Activated CD4-positive, alpha-beta memory T cell treated with anti-CD3 and anti-CD28 coated beads for 36 hours (primary cell): ENCODE measurements at regions of chr9 and their contacts with region 1.

Region 1: GRCh38 chr9:33290247-33291030 is at the start of gene NFX1:
- DNase-seq: peak; percentile 100
- H3K4me3 Mint-ChIP-seq: peak within 1 kb of the TSS; percentile 80
- H3K27ac Mint-ChIP-seq: peak within 1 kb of the TSS; percentile 100
- H3K4me1 Mint-ChIP-seq: peaks cover 54% of the 10 kb centered on the region
- H3K27me3 Mint-ChIP-seq: no peaks in the 10 kb centered on the region
- total RNA-seq, gene NFX1: 36.5 to 38.6 TPM

Region 2: GRCh38 chr9:33024966-33025571 is 265.4 kb before region 1 on chr9 and contains the start of gene DNAJA1:
- CTCF ChIA-PET with region 1: no interaction called
- POLR2A ChIA-PET with region 1: interaction called, 8 read pairs
- intact Hi-C with region 1: loop called (anchors 1 kb)
- DNase-seq: peak; percentile 96
- H3K4me3 Mint-ChIP-seq: peak within 1 kb of the TSS; percentile 98
- H3K27ac Mint-ChIP-seq: peak within 1 kb of the TSS; percentile 95
- H3K4me1 Mint-ChIP-seq: peaks cover 57% of the 10 kb centered on the region
- H3K27me3 Mint-ChIP-seq: no peaks in the 10 kb centered on the region
- total RNA-seq, gene DNAJA1: 173 to 184 TPM

Region 3: DNA sequence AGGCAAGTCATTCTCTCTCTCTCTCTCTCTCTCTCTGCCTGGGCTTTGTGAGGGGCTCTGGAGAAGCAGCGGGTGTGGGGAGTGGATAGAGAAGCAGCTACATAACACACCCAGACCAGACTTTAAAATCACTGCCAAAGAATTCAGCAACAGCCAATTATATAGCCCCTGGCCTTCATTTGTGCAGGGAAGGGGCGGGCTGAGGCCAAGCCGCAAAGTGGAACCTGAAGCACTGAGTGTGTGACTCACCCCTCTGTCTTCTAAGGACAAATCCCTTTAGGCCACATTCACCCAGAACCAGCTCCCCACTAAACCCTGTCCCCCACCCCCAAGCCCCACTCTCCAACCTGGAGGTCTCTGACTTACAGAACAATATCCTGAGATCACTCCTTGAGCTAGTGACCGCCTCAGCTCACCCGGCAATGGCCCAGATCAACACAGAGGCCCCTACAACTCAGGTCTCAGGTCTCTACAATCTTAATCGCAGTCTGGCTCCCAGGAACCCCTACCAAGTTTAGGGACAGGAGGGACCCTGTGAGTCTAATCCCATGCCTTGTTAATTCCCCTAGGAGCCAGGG is 129.3 kb before region 1 on chr9:
- CTCF ChIA-PET with region 1: no interaction called
- POLR2A ChIA-PET with region 1: no interaction called
- intact Hi-C with region 1: no loop called
- DNase-seq: peak; percentile 76
- H3K4me3 Mint-ChIP-seq: peak overlapping the region; percentile 73
- H3K27ac Mint-ChIP-seq: peak overlapping the region; percentile 97
- H3K4me1 Mint-ChIP-seq: peaks cover 84% of the 10 kb centered on the region
- H3K27me3 Mint-ChIP-seq: no peaks in the 10 kb centered on the region

Region 4: GRCh38 chr9:33264473-33265177 is 25.8 kb before region 1 on chr9 and contains the starts of genes BAG1 and CHMP5:
- CTCF ChIA-PET with region 1: interaction called, 3 read pairs
- POLR2A ChIA-PET with region 1: interaction called, 15 read pairs
- intact Hi-C with region 1: loop called (anchors 1 kb)
- DNase-seq: peak; percentile 100
- H3K4me3 Mint-ChIP-seq: peak within 1 kb of the TSS; percentile 91
- H3K27ac Mint-ChIP-seq: peak within 1 kb of the TSS; percentile 94
- H3K4me1 Mint-ChIP-seq: peaks cover 42% of the 10 kb centered on the region
- H3K27me3 Mint-ChIP-seq: no peaks in the 10 kb centered on the region
- total RNA-seq, gene BAG1: 52.7 to 56.6 TPM
- total RNA-seq, gene CHMP5: 116 to 119 TPM

Region 5: GRCh38 chr9:33320568-33321261 is 30.3 kb after region 1 on chr9:
- CTCF ChIA-PET with region 1: interaction called, 22 read pairs
- POLR2A ChIA-PET with region 1: interaction called, 23 read pairs
- intact Hi-C with region 1: loop called (anchors 1 kb)
- DNase-seq: peak; percentile 25
- H3K4me3 Mint-ChIP-seq: no peak overlapping the region
- H3K27ac Mint-ChIP-seq: peak overlapping the region; percentile 80
- H3K4me1 Mint-ChIP-seq: peaks cover 27% of the 10 kb centered on the region
- H3K27me3 Mint-ChIP-seq: no peaks in the 10 kb centered on the region

Region 6: DNA sequence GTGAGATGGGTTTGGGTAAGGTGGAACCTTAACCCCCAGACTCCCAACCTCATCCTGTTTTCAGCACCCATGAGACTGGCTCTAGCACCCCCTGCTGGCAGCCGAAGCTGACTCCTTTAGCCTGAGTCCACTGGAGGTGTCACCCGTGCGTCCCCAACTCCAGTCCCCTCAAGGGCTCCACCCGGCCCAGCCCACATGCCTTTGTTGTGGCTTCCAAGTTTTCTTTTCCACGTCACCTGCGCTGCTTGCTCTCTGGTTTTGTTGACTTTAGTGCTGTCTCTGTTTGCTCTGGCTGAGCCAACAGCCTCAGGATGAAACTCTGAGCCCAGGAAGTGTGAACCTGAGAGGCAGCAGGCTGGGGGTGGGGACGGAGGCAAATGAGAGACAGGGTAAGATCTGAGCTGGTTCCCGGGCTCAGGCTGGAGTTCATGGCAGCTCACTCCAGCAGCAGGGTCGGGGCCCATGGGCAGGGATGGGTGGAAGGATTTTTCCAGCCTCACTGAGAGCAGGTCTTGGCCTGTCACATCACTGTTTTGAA is 125.1 kb after region 1 on chr9:
- CTCF ChIA-PET with region 1: interaction called, 11 read pairs
- POLR2A ChIA-PET with region 1: no interaction called
- intact Hi-C with region 1: loop called (anchors 2 kb)
- DNase-seq: peak; percentile 97
- H3K4me3 Mint-ChIP-seq: peak overlapping the region; percentile 33
- H3K27ac Mint-ChIP-seq: peak overlapping the region; percentile 95
- H3K4me1 Mint-ChIP-seq: peaks cover 52% of the 10 kb centered on the region
- H3K27me3 Mint-ChIP-seq: no peaks in the 10 kb centered on the region

Region 7: GRCh38 chr9:33458444-33458843 is 168.0 kb after region 1 on chr9:
- CTCF ChIA-PET with region 1: interaction called, 9 read pairs
- POLR2A ChIA-PET with region 1: no interaction called
- intact Hi-C with region 1: loop called (anchors 1 kb)
- DNase-seq: peak; percentile 84
- H3K4me3 Mint-ChIP-seq: peak overlapping the region; percentile 13
- H3K27ac Mint-ChIP-seq: peak overlapping the region; percentile 89
- H3K4me1 Mint-ChIP-seq: peaks cover 58% of the 10 kb centered on the region
- H3K27me3 Mint-ChIP-seq: no peaks in the 10 kb centered on the region

Region 8: GRCh38 chr9:33473643-33474352 is 183.4 kb after region 1 on chr9 and contains the start of gene NOL6:
- CTCF ChIA-PET with region 1: interaction called, 5 read pairs
- POLR2A ChIA-PET with region 1: interaction called, 7 read pairs
- intact Hi-C with region 1: loop called (anchors 1 kb)
- DNase-seq: peak; percentile 99
- H3K4me3 Mint-ChIP-seq: peak within 1 kb of the TSS; percentile 99
- H3K27ac Mint-ChIP-seq: peak within 1 kb of the TSS; percentile 93
- H3K4me1 Mint-ChIP-seq: peaks cover 24% of the 10 kb centered on the region
- H3K27me3 Mint-ChIP-seq: no peaks in the 10 kb centered on the region
- total RNA-seq, gene NOL6: 38.1 to 39.7 TPM